GM12878 (cell line): ENCODE measurements at regions of chr5 and their contacts with region 1.

Region 1: GRCh38 chr5:103139264-103139865 is 19.3 kb downstream of the PPIP5K2 start:
- DNase-seq: peak; percentile 30
- ATAC-seq: peak; percentile 100
- H3K4me3 ChIP-seq: no peak overlapping the region
- H3K27ac ChIP-seq: no peak overlapping the region
- H3K4me1 ChIP-seq: no peaks in the 10 kb centered on the region
- H3K27me3 ChIP-seq: no peaks in the 10 kb centered on the region
- CTCF ChIP-seq: peak; percentile 83 to 96 (median 94); a peak in 5 of 6 replicates
- EP300 ChIP-seq: no peak
- POLR2A ChIP-seq: no peak
- RAD21 ChIP-seq: peak; percentile 98

Region 2: DNA sequence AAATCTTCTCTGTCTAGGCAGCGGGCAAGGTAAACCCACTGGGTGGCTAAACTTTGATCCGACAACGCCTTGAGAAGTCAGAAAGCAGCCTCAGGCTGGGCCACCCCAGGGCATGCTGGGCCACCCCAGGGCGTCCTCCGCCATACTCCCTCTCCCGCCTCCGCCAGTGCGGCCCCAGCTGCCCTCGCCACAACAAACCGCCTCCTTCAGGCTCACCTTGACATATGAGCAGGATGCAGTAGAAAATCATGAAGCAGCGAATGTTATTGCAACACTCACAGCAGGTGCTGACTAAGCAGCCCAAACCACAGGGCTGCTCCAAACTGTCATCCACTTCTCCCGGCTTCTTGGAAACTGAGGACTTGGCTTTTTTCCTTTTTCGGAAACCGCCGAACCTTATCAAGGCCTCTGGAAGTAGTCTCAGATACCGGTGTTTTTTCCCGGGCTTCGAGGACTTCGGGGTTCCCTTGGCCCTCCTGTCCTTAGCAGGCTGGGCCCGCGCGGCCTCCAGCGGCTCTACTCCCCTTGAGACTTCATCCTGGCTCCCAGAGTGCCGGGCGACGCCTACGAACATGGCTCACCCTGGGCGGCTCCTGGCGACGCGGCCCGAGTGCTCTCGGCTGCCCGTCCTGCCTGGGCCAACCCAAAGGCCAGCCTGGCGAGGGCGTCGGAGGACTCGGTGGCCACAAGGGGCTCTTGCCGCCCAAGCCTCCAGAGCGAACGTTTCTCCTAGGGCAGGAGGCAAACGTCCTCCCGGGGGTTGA is 640.9 kb before region 1 on chr5 and contains the start of gene SLCO6A1:
- CTCF ChIA-PET with region 1: no interaction called
- POLR2A ChIA-PET with region 1: no interaction called
- RAD21 ChIA-PET with region 1: no interaction called
- SMC1A ChIA-PET with region 1: no interaction called
- in situ Hi-C with region 1: no loop called
- intact Hi-C with region 1: no loop called
- DNase-seq: no peak
- ATAC-seq: no peak
- H3K4me3 ChIP-seq: no peak within 1 kb of the TSS
- H3K27ac ChIP-seq: no peak within 1 kb of the TSS
- H3K4me1 ChIP-seq: no peaks in the 10 kb centered on the region
- H3K27me3 ChIP-seq: no peaks in the 10 kb centered on the region
- CTCF ChIP-seq: no peak
- EP300 ChIP-seq: no peak
- POLR2A ChIP-seq: no peak
- RAD21 ChIP-seq: no peak
- polyA plus RNA-seq, gene SLCO6A1: not detected

Region 3: GRCh38 chr5:102583276-102584124 is 555.9 kb before region 1 on chr5:
- CTCF ChIA-PET with region 1: interaction called, 5 read pairs
- POLR2A ChIA-PET with region 1: no interaction called
- RAD21 ChIA-PET with region 1: interaction called, 3 read pairs
- SMC1A ChIA-PET with region 1: interaction called, 7 read pairs
- in situ Hi-C with region 1: loop called (anchors 10 kb)
- intact Hi-C with region 1: loop called (anchors 1 kb)
- DNase-seq: no peak
- ATAC-seq: peak; percentile 34; the same call in 1 of the 3 replicates
- H3K4me3 ChIP-seq: no peak overlapping the region
- H3K27ac ChIP-seq: no peak overlapping the region
- H3K4me1 ChIP-seq: no peaks in the 10 kb centered on the region
- H3K27me3 ChIP-seq: no peaks in the 10 kb centered on the region
- CTCF ChIP-seq: peak in 2 of 3 experiments; percentile 23 to 32; a peak in 3 of 6 replicates
- EP300 ChIP-seq: no peak
- POLR2A ChIP-seq: no peak
- RAD21 ChIP-seq: 0 out of 2 replicates have a peak, but pooled peaks have one; percentile 6

Region 4: DNA sequence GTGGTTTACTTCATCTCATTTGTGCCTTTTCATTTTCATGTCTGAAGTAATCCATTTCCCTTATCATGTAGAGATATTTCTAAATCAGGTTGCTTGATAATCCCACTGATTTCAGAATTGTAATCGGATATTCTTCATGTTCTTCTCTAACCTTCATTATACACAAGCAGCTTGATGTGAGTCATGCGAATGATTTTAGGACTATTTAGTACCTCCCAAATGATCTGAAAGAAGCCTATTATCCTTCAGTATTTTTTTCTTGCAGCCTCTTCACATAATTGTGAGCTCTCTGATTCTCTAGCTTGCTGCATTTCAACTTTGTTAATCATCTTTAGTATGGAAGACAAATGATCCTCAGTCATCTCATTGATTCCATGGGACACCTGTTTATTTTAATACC is 201.4 kb before region 1 on chr5:
- CTCF ChIA-PET with region 1: no interaction called
- POLR2A ChIA-PET with region 1: no interaction called
- RAD21 ChIA-PET with region 1: no interaction called
- SMC1A ChIA-PET with region 1: interaction called, 3 read pairs
- in situ Hi-C with region 1: no loop called
- intact Hi-C with region 1: loop called (anchors 10 kb)
- DNase-seq: no peak
- ATAC-seq: no peak
- H3K4me3 ChIP-seq: no peak overlapping the region
- H3K27ac ChIP-seq: no peak overlapping the region
- H3K4me1 ChIP-seq: no peaks in the 10 kb centered on the region
- H3K27me3 ChIP-seq: no peaks in the 10 kb centered on the region
- CTCF ChIP-seq: no peak
- EP300 ChIP-seq: no peak
- POLR2A ChIP-seq: no peak
- RAD21 ChIP-seq: no peak

Region 5: DNA sequence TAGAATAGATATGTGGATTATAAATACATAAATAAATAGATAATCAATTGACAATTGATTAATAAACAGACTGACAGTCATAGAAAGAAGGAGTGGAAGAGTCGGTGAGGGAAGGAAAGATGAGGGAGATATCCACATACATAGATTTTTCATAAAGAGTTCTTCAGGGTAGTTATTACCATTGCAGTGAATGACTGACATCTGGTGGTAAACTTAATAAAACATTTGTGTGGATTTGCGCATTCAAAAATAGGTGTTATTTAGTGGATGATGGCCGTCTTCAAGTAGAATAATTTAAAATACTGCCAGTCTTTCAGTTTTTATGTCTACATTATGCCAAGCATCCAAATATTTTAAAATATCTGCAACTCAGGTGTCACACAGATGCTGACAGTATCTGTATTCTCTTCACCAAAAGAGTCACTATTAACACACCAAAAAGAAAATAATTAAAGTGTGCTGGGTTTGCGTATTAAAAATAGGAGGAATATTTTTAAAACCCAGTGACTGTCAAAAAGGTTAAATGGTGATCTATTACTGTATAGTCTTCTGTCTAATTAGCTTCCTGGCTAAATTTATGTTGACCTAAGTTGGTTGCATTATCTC is 98.2 kb before region 1 on chr5:
- CTCF ChIA-PET with region 1: interaction called, 8 read pairs
- POLR2A ChIA-PET with region 1: no interaction called
- RAD21 ChIA-PET with region 1: interaction called, 4 read pairs
- SMC1A ChIA-PET with region 1: interaction called, 5 read pairs
- in situ Hi-C with region 1: no loop called
- intact Hi-C with region 1: loop called (anchors 2 kb)
- DNase-seq: no peak
- ATAC-seq: peak; percentile 68
- H3K4me3 ChIP-seq: no peak overlapping the region
- H3K27ac ChIP-seq: no peak overlapping the region
- H3K4me1 ChIP-seq: no peaks in the 10 kb centered on the region
- H3K27me3 ChIP-seq: no peaks in the 10 kb centered on the region
- CTCF ChIP-seq: peak; percentile 16 to 58 (median 28); a peak in 4 of 6 replicates
- EP300 ChIP-seq: no peak
- POLR2A ChIP-seq: no peak
- RAD21 ChIP-seq: peak; percentile 79

Region 6: GRCh38 chr5:103119765-103120606 is 19.4 kb before region 1 on chr5 and contains the starts of genes GIN1 and PPIP5K2:
- CTCF ChIA-PET with region 1: interaction called, 14 read pairs
- POLR2A ChIA-PET with region 1: interaction called, 3 read pairs
- RAD21 ChIA-PET with region 1: interaction called, 4 read pairs
- SMC1A ChIA-PET with region 1: interaction called, 8 read pairs
- in situ Hi-C with region 1: no loop called
- intact Hi-C with region 1: no loop called
- DNase-seq: peak; percentile 98
- ATAC-seq: peak; percentile 86
- H3K4me3 ChIP-seq: peak within 1 kb of the TSS; percentile 97
- H3K27ac ChIP-seq: peak within 1 kb of the TSS; percentile 97
- H3K4me1 ChIP-seq: no peaks in the 10 kb centered on the region
- H3K27me3 ChIP-seq: no peaks in the 10 kb centered on the region
- CTCF ChIP-seq: no peak
- EP300 ChIP-seq: peak; percentile 42 to 43; a peak in 2 of 4 replicates
- POLR2A ChIP-seq: peak; percentile 75
- RAD21 ChIP-seq: no peak
- polyA plus RNA-seq, gene GIN1: 5.3 to 7.6 TPM
- polyA plus RNA-seq, gene PPIP5K2: 33.4 to 41.2 TPM

Region 7: GRCh38 chr5:103127292-103127817 is 12.0 kb before region 1 on chr5:
- CTCF ChIA-PET with region 1: interaction called, 24 read pairs
- POLR2A ChIA-PET with region 1: no interaction called
- RAD21 ChIA-PET with region 1: interaction called, 4 read pairs
- SMC1A ChIA-PET with region 1: interaction called, 13 read pairs
- in situ Hi-C with region 1: no loop called
- intact Hi-C with region 1: no loop called
- DNase-seq: no peak
- ATAC-seq: no peak
- H3K4me3 ChIP-seq: no peak overlapping the region
- H3K27ac ChIP-seq: no peak overlapping the region
- H3K4me1 ChIP-seq: no peaks in the 10 kb centered on the region
- H3K27me3 ChIP-seq: no peaks in the 10 kb centered on the region
- CTCF ChIP-seq: no peak
- EP300 ChIP-seq: no peak
- POLR2A ChIP-seq: no peak
- RAD21 ChIP-seq: no peak